Activated CD4-positive, alpha-beta T cell treated with anti-CD3 and anti-CD28 coated beads for 36 hours (primary cell): ENCODE measurements at regions of chr5 and their contacts with region 1.

Region 1: GRCh38 chr5:110751902-110752762 is 13.3 kb downstream of the SLC25A46 start:
- DNase-seq: peak; percentile 49
- ATAC-seq: peak; percentile 92
- H3K4me3 Mint-ChIP-seq: peak overlapping the region; percentile 20
- H3K27ac Mint-ChIP-seq: peak overlapping the region; percentile 83
- H3K4me1 Mint-ChIP-seq: peaks cover 46% of the 10 kb centered on the region
- H3K27me3 Mint-ChIP-seq: no peaks in the 10 kb centered on the region

Region 2: DNA sequence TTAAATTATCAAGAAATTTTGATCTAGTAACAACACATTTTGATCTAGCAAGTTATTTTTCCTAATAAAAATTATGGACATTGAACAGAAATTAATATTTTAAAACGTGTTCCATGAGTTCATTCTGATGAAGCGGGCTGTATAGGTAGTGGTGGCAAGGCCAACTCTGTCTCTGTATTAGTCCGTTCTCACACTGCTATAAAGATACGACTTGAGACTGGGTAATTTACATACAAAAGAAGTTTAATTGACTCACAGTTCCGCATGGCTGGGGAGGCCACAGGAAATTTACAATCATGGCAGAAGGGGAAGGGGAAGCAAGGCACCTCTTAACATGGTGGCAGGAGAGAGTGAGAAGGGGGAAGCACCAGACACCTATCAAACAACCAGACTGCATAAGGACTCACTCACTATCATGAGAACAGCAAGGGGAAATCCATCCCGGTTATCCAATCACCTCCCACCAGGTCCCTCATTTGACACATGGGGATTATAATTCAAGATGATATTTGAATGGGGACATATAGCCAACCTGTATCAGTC is 86.9 kb before region 1 on chr5:
- CTCF ChIA-PET with region 1: no interaction called
- POLR2A ChIA-PET with region 1: no interaction called
- intact Hi-C with region 1: no loop called
- DNase-seq: no peak
- ATAC-seq: no peak
- H3K4me3 Mint-ChIP-seq: no peak overlapping the region
- H3K27ac Mint-ChIP-seq: no peak overlapping the region
- H3K4me1 Mint-ChIP-seq: no peaks in the 10 kb centered on the region
- H3K27me3 Mint-ChIP-seq: no peaks in the 10 kb centered on the region

Region 3: DNA sequence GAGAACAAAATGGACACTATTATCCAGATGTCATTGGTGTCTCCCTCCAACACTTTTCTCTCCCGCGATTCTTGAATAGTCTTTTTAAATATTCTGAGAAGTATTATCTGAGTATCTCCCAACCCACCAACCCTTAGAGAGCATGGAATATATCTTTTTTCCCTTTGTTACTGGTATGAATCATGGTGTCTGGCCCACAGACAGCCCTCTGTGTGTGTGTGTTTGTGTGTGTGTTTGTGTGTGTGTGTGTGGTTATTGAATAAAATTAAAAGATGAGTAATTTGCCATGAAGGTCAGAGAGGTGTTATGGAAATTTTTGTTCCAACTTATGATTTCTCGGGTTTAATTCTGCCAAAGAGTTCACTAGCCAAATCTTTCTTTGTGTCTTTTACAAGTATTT is 519.8 kb after region 1 on chr5:
- CTCF ChIA-PET with region 1: no interaction called
- POLR2A ChIA-PET with region 1: no interaction called
- intact Hi-C with region 1: loop called in 1 of 2 experiments (anchors 2 kb)
- DNase-seq: no peak
- ATAC-seq: peak; percentile 34
- H3K4me3 Mint-ChIP-seq: no peak overlapping the region
- H3K27ac Mint-ChIP-seq: peak overlapping the region; percentile 76
- H3K4me1 Mint-ChIP-seq: peaks cover 73% of the 10 kb centered on the region
- H3K27me3 Mint-ChIP-seq: no peaks in the 10 kb centered on the region